ENCODE measurements at regions of chr1 and their contacts with region 1.

Region 1: GRCh38 chr1:40385437-40386358 is 12.2 kb downstream of the SMAP2 start:
- DNase-seq: peak; percentile 85
- H3K4me3 Mint-ChIP-seq: peak overlapping the region; percentile 80
- H3K27ac Mint-ChIP-seq: peak overlapping the region; percentile 99
- H3K4me1 Mint-ChIP-seq: peaks cover 88% of the 10 kb centered on the region
- H3K27me3 Mint-ChIP-seq: no peaks in the 10 kb centered on the region

Region 2: DNA sequence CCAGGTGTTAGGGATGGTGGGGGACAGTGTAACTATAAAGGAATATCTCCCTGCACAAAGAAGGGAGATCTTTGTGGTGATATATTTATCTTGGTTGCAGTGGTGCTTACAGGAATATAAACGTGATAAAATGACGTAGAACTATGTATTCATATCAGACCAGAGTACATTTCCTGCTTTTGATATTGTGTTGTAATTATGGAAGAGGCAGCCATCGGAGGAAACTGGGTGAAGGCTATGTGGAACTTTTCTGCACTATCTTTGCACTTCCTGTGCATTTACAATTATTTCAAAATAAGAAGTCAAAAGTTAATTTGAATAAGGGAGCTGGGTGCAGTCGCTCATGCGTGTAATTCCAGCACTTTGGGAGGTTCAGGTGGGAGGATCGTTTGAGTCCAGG is 1321.9 kb before region 1 on chr1:
- CTCF ChIA-PET with region 1: no interaction called
- intact Hi-C with region 1: no loop called
- DNase-seq: no peak
- H3K4me3 Mint-ChIP-seq: no peak overlapping the region
- H3K27ac Mint-ChIP-seq: no peak overlapping the region
- H3K4me1 Mint-ChIP-seq: no peaks in the 10 kb centered on the region
- H3K27me3 Mint-ChIP-seq: no peaks in the 10 kb centered on the region

Region 3: DNA sequence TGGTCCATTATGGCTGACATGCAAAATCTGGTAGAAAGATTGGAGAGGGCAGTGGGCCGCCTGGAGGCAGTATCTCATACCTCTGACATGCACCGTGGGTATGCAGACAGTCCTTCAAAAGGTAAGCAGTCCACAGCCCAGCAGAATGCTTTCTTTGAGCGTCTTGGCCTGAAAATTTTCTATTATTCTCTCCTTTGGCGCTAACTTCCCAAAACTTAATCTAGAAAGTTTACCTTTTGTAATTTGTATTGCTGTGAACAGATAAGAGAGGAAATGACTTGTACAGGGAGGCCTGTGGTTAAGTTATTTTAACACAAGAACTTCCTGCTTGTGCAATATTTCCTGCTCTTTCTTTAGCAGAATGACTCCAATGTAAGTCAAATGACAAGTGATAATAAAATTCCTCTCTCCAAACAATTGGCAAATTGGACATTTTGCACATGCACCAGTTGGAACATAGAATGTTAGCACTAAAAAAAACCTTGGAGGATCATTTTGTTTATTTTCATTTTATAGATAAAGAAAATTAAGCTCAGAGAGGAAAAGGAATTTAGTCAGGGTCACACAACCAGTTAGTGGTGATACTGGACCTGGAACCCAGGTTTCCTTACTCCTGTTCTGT is 326.2 kb before region 1 on chr1:
- CTCF ChIA-PET with region 1: no interaction called
- intact Hi-C with region 1: loop called (anchors 2 kb)
- DNase-seq: no peak
- H3K4me3 Mint-ChIP-seq: peak overlapping the region; percentile 41
- H3K27ac Mint-ChIP-seq: peak overlapping the region; percentile 83
- H3K4me1 Mint-ChIP-seq: peaks cover 88% of the 10 kb centered on the region
- H3K27me3 Mint-ChIP-seq: no peaks in the 10 kb centered on the region

Region 4: GRCh38 chr1:40257688-40258444 is 127.8 kb before region 1 on chr1 and contains the start of gene ZMPSTE24:
- CTCF ChIA-PET with region 1: no interaction called
- intact Hi-C with region 1: loop called (anchors 1 kb)
- DNase-seq: peak; percentile 98
- H3K4me3 Mint-ChIP-seq: peak within 1 kb of the TSS; percentile 99
- H3K27ac Mint-ChIP-seq: peak within 1 kb of the TSS; percentile 100
- H3K4me1 Mint-ChIP-seq: peaks cover 35% of the 10 kb centered on the region
- H3K27me3 Mint-ChIP-seq: no peaks in the 10 kb centered on the region
- total RNA-seq, gene ZMPSTE24: 13.2 to 14.7 TPM

Region 5: DNA sequence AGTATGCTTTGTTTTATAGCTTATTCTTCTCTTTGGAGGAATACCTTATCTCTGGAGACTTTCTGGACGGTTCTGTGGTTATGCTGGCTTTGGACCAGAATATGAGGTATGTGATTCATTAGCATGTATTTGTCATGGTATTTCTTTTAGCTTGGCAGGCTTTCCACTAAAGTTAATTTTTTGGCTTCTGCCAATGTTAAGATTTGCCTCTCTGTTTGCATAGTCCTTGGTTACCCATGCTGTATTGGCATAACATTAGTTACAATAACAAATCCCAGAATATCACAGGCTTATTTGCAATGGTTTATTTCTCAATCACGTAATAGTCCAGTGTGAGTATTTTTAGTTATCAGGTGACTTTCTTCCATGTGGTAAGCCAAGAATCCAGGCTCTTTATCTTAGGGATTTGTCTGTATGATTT is 117.9 kb before region 1 on chr1:
- CTCF ChIA-PET with region 1: no interaction called
- intact Hi-C with region 1: loop called (anchors 1 kb)
- DNase-seq: no peak
- H3K4me3 Mint-ChIP-seq: no peak overlapping the region
- H3K27ac Mint-ChIP-seq: no peak overlapping the region
- H3K4me1 Mint-ChIP-seq: peaks cover 53% of the 10 kb centered on the region
- H3K27me3 Mint-ChIP-seq: no peaks in the 10 kb centered on the region

Region 6: GRCh38 chr1:40373338-40374283 is 12.1 kb before region 1 on chr1 and contains the start of gene SMAP2:
- CTCF ChIA-PET with region 1: interaction called, 10 read pairs
- intact Hi-C with region 1: loop called (anchors 1 kb)
- DNase-seq: peak; percentile 97
- H3K4me3 Mint-ChIP-seq: peak within 1 kb of the TSS; percentile 98
- H3K27ac Mint-ChIP-seq: peak within 1 kb of the TSS; percentile 99
- H3K4me1 Mint-ChIP-seq: peaks cover 46% of the 10 kb centered on the region
- H3K27me3 Mint-ChIP-seq: no peaks in the 10 kb centered on the region
- total RNA-seq, gene SMAP2: 390 to 391 TPM

Region 7: GRCh38 chr1:40404670-40405462 is 19.2 kb after region 1 on chr1:
- CTCF ChIA-PET with region 1: interaction called, 33 read pairs
- intact Hi-C with region 1: loop called (anchors 1 kb)
- DNase-seq: peak; percentile 62
- H3K4me3 Mint-ChIP-seq: peak overlapping the region; percentile 41
- H3K27ac Mint-ChIP-seq: peak overlapping the region; percentile 94
- H3K4me1 Mint-ChIP-seq: peaks cover 71% of the 10 kb centered on the region
- H3K27me3 Mint-ChIP-seq: no peaks in the 10 kb centered on the region

Region 8: GRCh38 chr1:40438391-40439015 is 52.8 kb after region 1 on chr1:
- CTCF ChIA-PET with region 1: no interaction called
- intact Hi-C with region 1: no loop called
- DNase-seq: peak; percentile 33
- H3K4me3 Mint-ChIP-seq: no peak overlapping the region
- H3K27ac Mint-ChIP-seq: no peak overlapping the region
- H3K4me1 Mint-ChIP-seq: peaks cover 6% of the 10 kb centered on the region
- H3K27me3 Mint-ChIP-seq: no peaks in the 10 kb centered on the region

Region 9: GRCh38 chr1:41739061-41739955 is 1353.6 kb after region 1 on chr1:
- CTCF ChIA-PET with region 1: no interaction called
- intact Hi-C with region 1: loop called (anchors 10 kb)
- DNase-seq: peak; percentile 96
- H3K4me3 Mint-ChIP-seq: peak overlapping the region; percentile 73
- H3K27ac Mint-ChIP-seq: peak overlapping the region; percentile 98
- H3K4me1 Mint-ChIP-seq: peaks cover 93% of the 10 kb centered on the region
- H3K27me3 Mint-ChIP-seq: no peaks in the 10 kb centered on the region